Activated CD8-positive, alpha-beta T cell treated with anti-CD3 and anti-CD28 coated beads, Interleukin-2, amount 10 ng/mL, durations not matched to agents 7 days and 5 days (primary cell): ENCODE measurements at regions of chr16 and their contacts with region 1.

Region 1: GRCh38 chr16:67159593-67160406 is at the starts of genes FBXL8 and TRADD:
- DNase-seq: peak; percentile 86
- ATAC-seq: peak; percentile 73
- H3K4me3 Mint-ChIP-seq: peak within 1 kb of the TSS; percentile 96
- H3K27ac Mint-ChIP-seq: peak within 1 kb of the TSS; percentile 94
- H3K4me1 Mint-ChIP-seq: peaks cover 73% of the 10 kb centered on the region
- H3K27me3 Mint-ChIP-seq: peaks cover 15% of the 10 kb centered on the region
- total RNA-seq, gene FBXL8: 22.7 to 24.8 TPM
- total RNA-seq, gene TRADD: 39.2 to 40.7 TPM

Region 2: DNA sequence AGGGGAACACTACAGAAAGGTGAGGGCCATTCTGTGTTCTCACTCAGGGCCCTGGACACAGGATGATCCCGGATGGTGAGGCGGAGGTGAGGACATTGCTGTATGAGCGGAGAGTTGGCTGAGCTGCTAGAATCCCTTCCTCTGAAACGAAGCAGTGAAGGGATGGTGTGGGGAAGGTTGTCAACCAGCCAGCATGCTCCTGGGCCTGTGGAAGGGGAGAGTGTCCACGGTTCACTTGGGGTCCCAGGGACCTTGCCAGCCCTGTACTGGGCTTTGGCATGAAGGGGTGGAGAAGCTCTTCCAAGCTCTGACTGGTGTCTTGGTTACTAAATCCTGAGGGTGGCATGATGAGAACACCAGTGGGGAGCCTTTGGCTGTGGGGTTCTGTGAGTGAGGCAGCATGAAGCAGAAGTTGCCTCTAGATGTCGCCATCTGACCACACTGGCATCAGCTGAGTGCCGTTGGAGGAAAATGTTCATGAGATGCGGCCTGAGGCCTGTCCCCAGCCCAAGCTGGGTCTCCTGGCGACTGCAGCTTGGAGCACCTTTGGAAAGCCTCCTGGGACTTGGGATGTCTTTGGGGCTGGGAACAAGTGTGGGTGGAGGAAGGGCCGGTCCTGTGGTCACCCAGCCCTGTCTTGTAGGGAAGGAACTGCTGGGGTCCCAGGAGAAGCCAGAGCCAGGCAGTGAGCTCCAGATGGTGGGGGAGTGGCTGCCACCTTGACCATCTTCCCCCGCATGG is 264.7 kb before region 1 on chr16:
- CTCF ChIA-PET with region 1: interaction called, 10 read pairs
- POLR2A ChIA-PET with region 1: no interaction called
- DNase-seq: peak; percentile 82
- ATAC-seq: peak; percentile 94
- H3K4me3 Mint-ChIP-seq: no peak overlapping the region
- H3K27ac Mint-ChIP-seq: peak overlapping the region; percentile 51
- H3K4me1 Mint-ChIP-seq: peaks cover 22% of the 10 kb centered on the region
- H3K27me3 Mint-ChIP-seq: no peaks in the 10 kb centered on the region

Region 3: GRCh38 chr16:66961065-66961744 is 198.6 kb before region 1 on chr16 and contains the start of gene CES3:
- CTCF ChIA-PET with region 1: interaction called, 18 read pairs
- POLR2A ChIA-PET with region 1: no interaction called
- DNase-seq: peak; percentile 79
- ATAC-seq: peak; percentile 97
- H3K4me3 Mint-ChIP-seq: peak within 1 kb of the TSS; percentile 48
- H3K27ac Mint-ChIP-seq: peak within 1 kb of the TSS; percentile 86
- H3K4me1 Mint-ChIP-seq: peaks cover 39% of the 10 kb centered on the region
- H3K27me3 Mint-ChIP-seq: peaks cover 2% of the 10 kb centered on the region
- total RNA-seq, gene CES3: 2.4 to 4.3 TPM

Region 4: DNA sequence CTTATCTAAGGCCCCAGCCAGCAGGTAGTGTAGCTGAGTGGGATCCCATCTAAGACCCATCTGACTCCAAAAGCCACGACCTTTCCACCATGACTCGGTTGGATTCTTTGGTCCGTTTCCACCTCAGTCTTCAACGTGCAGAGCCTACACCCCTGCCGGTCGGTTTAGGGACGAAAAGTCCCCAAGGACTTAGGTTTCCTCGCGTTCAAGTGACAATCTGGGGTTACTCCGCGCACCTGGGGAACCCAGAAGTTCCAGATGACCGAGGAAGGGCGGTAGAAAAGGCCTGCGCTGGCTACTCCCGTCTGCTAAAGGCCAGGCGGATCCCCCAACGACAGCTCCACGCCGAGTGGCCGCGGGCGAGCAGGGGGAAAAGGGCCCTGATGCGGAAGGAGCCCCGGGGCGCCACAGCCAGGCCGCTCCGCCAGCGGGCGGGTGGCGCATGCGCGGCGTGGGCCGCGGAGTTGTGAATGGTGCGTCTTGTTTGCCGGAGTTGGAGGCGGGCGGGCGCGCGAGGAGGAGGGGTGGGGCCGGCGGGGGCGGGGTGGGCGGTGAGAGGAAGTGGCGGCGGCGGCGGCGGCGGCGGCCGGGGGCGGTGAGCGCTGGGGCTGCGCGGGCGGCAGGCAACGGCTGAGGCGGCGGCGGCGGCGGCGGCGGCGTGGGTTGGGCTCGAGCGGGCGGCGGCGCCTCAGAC is 131.1 kb before region 1 on chr16 and contains the start of gene CBFB:
- CTCF ChIA-PET with region 1: interaction called, 23 read pairs
- POLR2A ChIA-PET with region 1: interaction called, 6 read pairs
- DNase-seq: peak; percentile 95
- ATAC-seq: peak; percentile 94
- H3K4me3 Mint-ChIP-seq: peak within 1 kb of the TSS; percentile 95
- H3K27ac Mint-ChIP-seq: peak within 1 kb of the TSS; percentile 93
- H3K4me1 Mint-ChIP-seq: peaks cover 61% of the 10 kb centered on the region
- H3K27me3 Mint-ChIP-seq: no peaks in the 10 kb centered on the region
- total RNA-seq, gene CBFB: 235 to 241 TPM

Region 5: GRCh38 chr16:67129422-67129821 is 30.4 kb before region 1 on chr16:
- CTCF ChIA-PET with region 1: interaction called, 14 read pairs
- POLR2A ChIA-PET with region 1: no interaction called
- DNase-seq: no peak
- ATAC-seq: no peak
- H3K4me3 Mint-ChIP-seq: no peak overlapping the region
- H3K27ac Mint-ChIP-seq: no peak overlapping the region
- H3K4me1 Mint-ChIP-seq: no peaks in the 10 kb centered on the region
- H3K27me3 Mint-ChIP-seq: no peaks in the 10 kb centered on the region

Region 6: DNA sequence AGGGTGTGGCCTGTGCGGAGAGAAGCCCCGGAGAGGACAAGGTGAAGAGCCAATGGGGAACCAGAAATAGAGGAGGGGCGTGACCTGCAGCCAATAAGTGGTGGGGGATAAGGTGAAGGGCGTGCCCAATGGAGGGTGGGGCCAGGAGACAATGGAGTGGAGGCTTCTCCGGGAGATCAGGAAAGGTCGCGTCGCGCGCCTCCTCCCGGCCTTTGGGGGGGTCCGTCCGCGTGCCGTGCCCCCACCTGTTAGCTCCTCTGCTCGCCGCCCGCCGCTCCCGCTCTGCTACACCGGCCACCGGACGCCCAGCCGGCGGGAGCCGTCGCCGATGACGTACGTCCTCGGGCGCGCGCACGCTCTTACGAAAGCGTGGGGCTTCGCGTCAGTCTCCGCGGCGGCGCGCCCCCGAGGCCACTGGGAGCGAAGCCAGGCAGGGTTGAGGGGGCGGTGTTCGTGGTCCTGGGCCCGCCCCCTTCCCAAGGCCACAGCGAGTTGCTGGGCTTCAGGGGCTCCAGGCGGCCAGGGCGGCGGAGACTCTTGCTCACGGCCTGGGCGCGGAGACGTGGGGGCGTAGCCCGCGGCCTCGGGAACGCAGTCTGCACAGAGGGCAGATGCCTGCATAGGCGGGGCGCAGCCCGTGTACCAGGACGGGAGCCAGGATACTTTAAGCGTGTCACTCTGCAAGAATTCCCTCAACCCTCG is 24.0 kb after region 1 on chr16 and contains the start of gene MATCAP1:
- CTCF ChIA-PET with region 1: interaction called, 27 read pairs
- POLR2A ChIA-PET with region 1: interaction called, 4 read pairs
- DNase-seq: peak; percentile 97
- ATAC-seq: peak; percentile 95
- H3K4me3 Mint-ChIP-seq: no peak within 1 kb of the TSS
- H3K27ac Mint-ChIP-seq: no peak within 1 kb of the TSS
- H3K4me1 Mint-ChIP-seq: peaks cover 19% of the 10 kb centered on the region
- H3K27me3 Mint-ChIP-seq: peaks cover 13% of the 10 kb centered on the region
- total RNA-seq, gene MATCAP1: 43.3 to 48.2 TPM